AG04449 (cell line): ENCODE measurements at regions of chr6 and their contacts with region 1.

Region 1: GRCh38 chr6:156820089-156820798 is 43.1 kb downstream of the ARID1B start:
- DNase-seq: no peak
- H3K4me3 ChIP-seq: no peak overlapping the region
- CTCF ChIP-seq: no peak

Region 2: GRCh38 chr6:156791320-156791850 is 28.9 kb before region 1 on chr6:
- CTCF ChIA-PET with region 1: no interaction called
- POLR2A ChIA-PET with region 1: no interaction called
- DNase-seq: no peak
- H3K4me3 ChIP-seq: no peak overlapping the region
- CTCF ChIP-seq: no peak

Region 3: DNA sequence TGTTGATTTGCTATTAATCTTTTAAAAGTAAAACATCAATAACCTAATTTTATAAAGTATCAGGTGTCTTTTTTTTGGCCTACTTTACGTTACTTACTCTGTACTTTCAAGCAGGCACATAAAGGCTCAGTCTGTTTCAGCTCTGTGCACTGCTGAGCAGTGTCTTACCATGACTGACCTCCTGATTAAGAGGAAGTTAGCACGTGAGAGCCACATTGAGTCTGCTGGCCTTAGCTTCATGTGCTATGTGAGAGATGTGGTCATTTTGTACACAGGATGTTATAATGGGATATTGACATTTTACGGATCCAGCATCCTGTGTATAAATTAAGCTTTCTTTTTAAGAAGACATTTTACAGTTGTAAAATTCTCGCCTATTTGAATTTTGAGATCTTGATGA is 11.2 kb before region 1 on chr6:
- CTCF ChIA-PET with region 1: interaction called, 12 read pairs
- POLR2A ChIA-PET with region 1: no interaction called
- DNase-seq: no peak
- H3K4me3 ChIP-seq: no peak overlapping the region
- CTCF ChIP-seq: no peak